ENCODE measurements at regions of chr18 and their contacts with region 1.

Region 1: DNA sequence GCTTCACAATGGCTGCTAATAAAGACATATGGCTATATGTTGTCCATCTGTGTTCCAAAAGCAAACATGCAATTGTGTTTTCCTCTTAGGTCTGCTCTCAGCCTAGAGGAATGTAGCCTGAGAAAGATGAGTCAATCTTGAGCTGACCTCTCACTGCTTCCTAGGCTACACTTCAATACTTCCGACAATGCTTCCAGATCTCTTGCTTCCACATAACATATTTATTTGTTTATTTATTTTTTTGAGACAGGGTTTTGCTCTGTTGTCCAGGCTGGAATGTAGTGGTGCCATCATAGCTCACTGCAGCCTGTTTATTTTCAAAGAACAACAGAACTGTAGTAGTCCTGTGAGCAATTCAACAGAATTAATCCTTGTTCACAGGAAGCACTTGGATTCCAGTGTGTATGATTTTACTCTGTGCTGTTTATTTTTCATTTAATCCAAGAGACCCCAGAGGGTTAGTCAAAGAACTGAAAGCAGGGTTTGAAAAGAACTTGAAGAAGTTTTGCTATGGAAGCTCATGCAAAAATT is 437.9 kb downstream of the TXNL1 start:
- DNase-seq: peak; percentile 93
- H3K4me3 ChIP-seq: no peak overlapping the region
- H3K27ac ChIP-seq: peak overlapping the region; percentile 98
- H3K4me1 ChIP-seq: peaks cover 66% of the 10 kb centered on the region
- H3K27me3 ChIP-seq: no peaks in the 10 kb centered on the region
- CTCF ChIP-seq: no peak
- POLR2A ChIP-seq: no peak

Region 2: GRCh38 chr18:55110436-55110835 is 1090.0 kb before region 1 on chr18:
- CTCF ChIA-PET with region 1: no interaction called
- POLR2A ChIA-PET with region 1: no interaction called
- dilution Hi-C with region 1: no loop called
- intact Hi-C with region 1: loop called (anchors 1 kb)
- DNase-seq: peak; percentile 73
- H3K4me3 ChIP-seq: no peak overlapping the region
- H3K27ac ChIP-seq: peak overlapping the region; percentile 90
- H3K4me1 ChIP-seq: peaks cover 23% of the 10 kb centered on the region
- H3K27me3 ChIP-seq: no peaks in the 10 kb centered on the region
- CTCF ChIP-seq: no peak
- POLR2A ChIP-seq: peak; percentile 35

Region 3: DNA sequence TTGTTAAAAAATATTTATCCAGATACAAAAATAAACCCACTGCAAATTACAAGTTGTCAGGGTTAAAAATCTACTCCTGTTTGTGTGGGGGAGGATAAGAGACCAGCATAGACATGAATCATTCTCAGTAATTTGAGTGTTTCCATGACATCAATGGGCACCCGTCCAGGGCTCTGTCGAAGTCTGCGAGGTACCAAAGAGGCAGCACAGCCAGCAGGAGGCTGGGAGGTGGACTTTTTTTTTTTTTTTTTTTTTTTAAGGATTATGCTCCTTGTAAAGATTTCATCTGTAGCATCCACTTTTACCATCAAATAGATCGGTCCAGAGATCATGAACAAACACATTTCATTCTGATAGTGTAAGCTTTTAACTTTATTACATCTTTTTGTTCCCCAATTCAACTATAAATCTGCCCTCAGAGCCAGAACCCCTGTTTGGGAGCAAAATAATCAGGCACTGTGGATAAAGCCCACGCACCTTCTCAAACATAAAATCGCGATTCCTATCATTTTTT is 794.5 kb before region 1 on chr18:
- CTCF ChIA-PET with region 1: interaction called, 7 read pairs
- POLR2A ChIA-PET with region 1: no interaction called
- dilution Hi-C with region 1: no loop called
- intact Hi-C with region 1: loop called (anchors 1 kb)
- DNase-seq: peak; percentile 97
- H3K4me3 ChIP-seq: no peak overlapping the region
- H3K27ac ChIP-seq: peak overlapping the region; percentile 73
- H3K4me1 ChIP-seq: peaks cover 48% of the 10 kb centered on the region
- H3K27me3 ChIP-seq: no peaks in the 10 kb centered on the region
- CTCF ChIP-seq: peak in 1 of 2 donors; percentile 20
- POLR2A ChIP-seq: no peak

Region 4: GRCh38 chr18:55781481-55781957 is 418.9 kb before region 1 on chr18:
- CTCF ChIA-PET with region 1: no interaction called
- POLR2A ChIA-PET with region 1: no interaction called
- dilution Hi-C with region 1: no loop called
- intact Hi-C with region 1: loop called (anchors 1 kb)
- DNase-seq: peak; percentile 90
- H3K4me3 ChIP-seq: no peak overlapping the region
- H3K27ac ChIP-seq: peak overlapping the region; percentile 47
- H3K4me1 ChIP-seq: peaks cover 27% of the 10 kb centered on the region
- H3K27me3 ChIP-seq: no peaks in the 10 kb centered on the region
- CTCF ChIP-seq: peak; percentile 75 to 85
- POLR2A ChIP-seq: no peak

Region 5: DNA sequence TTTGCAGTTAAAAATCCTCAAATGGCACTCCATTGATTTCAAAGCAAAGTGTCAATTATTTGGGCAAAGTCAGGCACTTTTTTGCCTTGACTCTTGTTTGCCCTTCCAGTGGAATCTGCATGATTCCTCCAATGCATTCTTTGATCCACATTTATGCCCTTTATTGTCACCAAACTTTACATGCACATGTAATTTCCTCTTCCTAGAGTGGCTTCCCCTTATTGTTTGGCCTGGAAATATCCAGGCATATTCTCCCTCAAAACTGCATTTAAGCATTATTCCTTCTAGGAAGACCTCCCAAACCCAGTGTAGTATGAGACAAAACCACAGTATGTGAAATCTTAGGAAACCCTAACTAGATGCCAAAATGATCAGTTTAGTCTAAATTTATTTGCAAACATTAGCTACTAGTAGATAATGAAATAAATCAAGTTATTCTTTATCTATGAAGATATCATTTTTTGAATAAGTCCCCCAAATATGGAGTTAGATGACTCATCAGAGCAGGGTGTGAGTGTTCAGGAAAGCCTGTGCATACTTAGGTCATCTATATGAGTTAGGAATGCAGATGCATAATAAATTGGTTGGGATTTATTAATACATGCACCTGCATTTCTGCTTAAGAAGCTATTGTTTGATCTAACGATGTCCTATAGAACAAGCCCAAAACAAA is 179.2 kb before region 1 on chr18:
- CTCF ChIA-PET with region 1: interaction called, 4 read pairs
- POLR2A ChIA-PET with region 1: no interaction called
- dilution Hi-C with region 1: no loop called
- intact Hi-C with region 1: loop called (anchors 1 kb)
- DNase-seq: peak; percentile 86
- H3K4me3 ChIP-seq: peak overlapping the region in 1 of 3 experiments; percentile 3
- H3K27ac ChIP-seq: peak overlapping the region; percentile 93
- H3K4me1 ChIP-seq: peaks cover 35% of the 10 kb centered on the region
- H3K27me3 ChIP-seq: no peaks in the 10 kb centered on the region
- CTCF ChIP-seq: no peak
- POLR2A ChIP-seq: no peak

Region 6: GRCh38 chr18:56211473-56211872 is 11.0 kb after region 1 on chr18:
- CTCF ChIA-PET with region 1: no interaction called
- POLR2A ChIA-PET with region 1: no interaction called
- dilution Hi-C with region 1: no loop called
- intact Hi-C with region 1: no loop called
- DNase-seq: peak; percentile 32
- H3K4me3 ChIP-seq: no peak overlapping the region
- H3K27ac ChIP-seq: no peak overlapping the region
- H3K4me1 ChIP-seq: no peaks in the 10 kb centered on the region
- H3K27me3 ChIP-seq: no peaks in the 10 kb centered on the region
- CTCF ChIP-seq: no peak
- POLR2A ChIP-seq: no peak

Region 7: DNA sequence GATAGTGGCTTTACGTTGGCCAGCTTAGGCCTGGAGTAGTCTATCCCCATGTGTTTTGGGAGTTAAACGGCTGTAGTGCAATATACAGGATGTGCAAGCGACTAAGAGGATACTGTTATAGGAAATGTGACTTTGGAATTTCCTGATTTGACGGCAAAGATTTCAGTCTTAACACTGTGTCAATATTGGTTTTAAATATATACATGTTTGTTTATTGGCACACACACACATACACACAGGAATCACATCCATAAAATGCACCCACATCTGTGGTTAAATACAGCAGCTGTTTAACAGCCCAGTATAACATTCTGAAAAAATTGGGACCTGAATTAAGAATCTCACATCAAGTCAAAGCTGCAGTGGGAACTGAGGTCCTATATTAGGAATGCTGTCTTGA is 90.8 kb after region 1 on chr18:
- CTCF ChIA-PET with region 1: no interaction called
- POLR2A ChIA-PET with region 1: no interaction called
- dilution Hi-C with region 1: no loop called
- intact Hi-C with region 1: loop called (anchors 1 kb)
- DNase-seq: peak; percentile 83
- H3K4me3 ChIP-seq: no peak overlapping the region
- H3K27ac ChIP-seq: peak overlapping the region; percentile 46
- H3K4me1 ChIP-seq: peaks cover 24% of the 10 kb centered on the region
- H3K27me3 ChIP-seq: no peaks in the 10 kb centered on the region
- CTCF ChIP-seq: no peak
- POLR2A ChIP-seq: no peak

Region 8: GRCh38 chr18:56458770-56459712 is 258.6 kb after region 1 on chr18:
- CTCF ChIA-PET with region 1: no interaction called
- POLR2A ChIA-PET with region 1: no interaction called
- dilution Hi-C with region 1: no loop called
- intact Hi-C with region 1: loop called (anchors 1 kb)
- DNase-seq: peak; percentile 95
- H3K4me3 ChIP-seq: no peak overlapping the region
- H3K27ac ChIP-seq: peak overlapping the region; percentile 65
- H3K4me1 ChIP-seq: peaks cover 28% of the 10 kb centered on the region
- H3K27me3 ChIP-seq: no peaks in the 10 kb centered on the region
- CTCF ChIP-seq: no peak
- POLR2A ChIP-seq: no peak

Measured in endothelial cell of umbilical vein (primary cell).